Tibial artery (tissue), 4 donors: ENCODE measurements at regions of chr20 and their contacts with region 1.

Region 1: GRCh38 chr20:35207950-35208611 is 18.4 kb upstream of the MMP24 start:
- DNase-seq: peak; percentile 80 to 86
- H3K4me3 ChIP-seq: peak overlapping the region; percentile 7 to 20
- H3K27ac ChIP-seq: peak overlapping the region; percentile 60 to 77
- H3K4me1 ChIP-seq: peaks cover 0 to 12% (median 7%) of the 10 kb centered on the region in 4 donors
- H3K27me3 ChIP-seq: no peaks in the 10 kb centered on the region
- CTCF ChIP-seq: peak; percentile 76 to 94

Region 2: GRCh38 chr20:35092524-35093266 is 115.4 kb before region 1 on chr20 and contains the start of gene TRPC4AP:
- intact Hi-C with region 1: loop called (anchors 5 kb)
- DNase-seq: peak; percentile 86 to 94
- H3K4me3 ChIP-seq: peak within 1 kb of the TSS; percentile 69 to 88
- H3K27ac ChIP-seq: peak within 1 kb of the TSS; percentile 88 to 93
- H3K4me1 ChIP-seq: peaks cover 0 to 49% (median 17%) of the 10 kb centered on the region in 4 donors
- H3K27me3 ChIP-seq: no peaks in the 10 kb centered on the region
- CTCF ChIP-seq: peak; percentile 96 to 98

Region 3: DNA sequence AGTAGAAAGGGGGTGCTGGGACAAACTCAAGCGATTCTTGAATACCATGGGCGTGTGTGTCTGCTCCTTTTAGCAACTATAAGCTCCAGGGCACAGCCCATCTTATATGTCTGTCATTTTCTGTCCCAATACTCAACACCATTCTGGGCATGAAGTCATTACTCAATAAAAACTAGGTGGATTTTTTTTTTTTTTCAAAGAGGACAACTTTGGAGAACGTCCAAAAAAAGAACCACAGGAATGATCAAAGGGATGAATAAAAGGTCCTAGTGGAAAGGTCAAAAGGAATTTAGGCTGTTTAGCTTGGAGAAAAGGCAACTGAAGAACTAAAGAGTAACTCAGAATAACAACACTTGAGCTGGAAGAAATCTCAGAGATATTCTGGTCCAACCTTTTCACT is 179.3 kb after region 1 on chr20:
- intact Hi-C with region 1: no loop called
- DNase-seq: no peak
- H3K4me3 ChIP-seq: no peak overlapping the region
- H3K27ac ChIP-seq: no peak overlapping the region
- H3K4me1 ChIP-seq: no peaks in the 10 kb centered on the region
- H3K27me3 ChIP-seq: no peaks in the 10 kb centered on the region
- CTCF ChIP-seq: no peak